Activated CD8-positive, alpha-beta memory T cell treated with anti-CD3 and anti-CD28 coated beads, Interleukin-2, amount 10 ng/mL, durations not matched to agents 7 days and 5 days (primary cell): ENCODE measurements at regions of chr16 and their contacts with region 1.

Region 1: GRCh38 chr16:72467157-72467759 is 295.3 kb upstream of the PMFBP1 start:
- DNase-seq: no peak
- ATAC-seq: no peak
- H3K4me3 Mint-ChIP-seq: no peak overlapping the region
- H3K27ac Mint-ChIP-seq: no peak overlapping the region
- H3K4me1 Mint-ChIP-seq: peaks cover 3% of the 10 kb centered on the region
- H3K27me3 Mint-ChIP-seq: no peaks in the 10 kb centered on the region

Region 2: DNA sequence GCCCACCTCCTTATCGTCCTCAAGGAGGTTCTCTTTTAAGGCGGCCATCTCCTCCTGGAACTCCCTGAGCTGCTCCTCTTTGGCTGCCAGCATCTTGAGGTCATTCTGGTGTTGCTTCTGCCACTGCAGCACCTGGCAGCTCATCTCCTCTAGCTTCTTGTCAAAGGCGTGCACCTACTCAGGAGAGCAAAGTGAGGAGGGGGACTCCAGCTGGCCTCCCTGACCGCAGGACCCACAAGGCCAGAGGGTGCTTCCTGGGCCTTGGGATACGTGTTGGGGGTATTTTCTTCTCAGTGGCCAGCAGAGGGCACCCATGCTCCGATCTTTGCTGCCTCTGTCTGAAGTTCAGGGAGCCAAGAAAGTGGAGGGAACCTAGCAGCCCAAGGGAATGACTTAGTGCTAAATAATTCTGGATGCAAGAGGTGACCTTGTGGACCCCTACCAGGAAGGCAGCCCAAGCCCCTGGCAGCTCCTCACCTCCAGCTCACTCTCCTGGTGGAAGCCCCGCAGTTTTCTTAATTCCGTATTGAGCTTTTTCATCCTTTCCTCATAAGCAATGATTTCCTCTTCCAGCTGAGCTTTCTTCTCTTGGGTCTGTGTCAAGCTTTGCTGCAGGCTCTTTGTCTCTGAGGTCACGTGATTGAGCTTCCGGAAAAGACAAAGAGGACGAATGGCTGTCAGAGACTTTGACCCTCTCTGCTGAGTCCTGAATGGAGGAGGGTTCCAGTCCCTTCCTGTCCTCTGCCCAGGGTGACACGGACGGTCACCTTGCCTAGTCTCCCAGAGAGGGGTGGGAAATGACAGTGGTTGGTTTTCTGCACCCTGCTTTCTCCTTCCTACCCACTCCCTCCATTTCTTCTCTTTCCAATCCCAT is 342.3 kb before region 1 on chr16:
- CTCF ChIA-PET with region 1: interaction called, 11 read pairs
- DNase-seq: peak; percentile 71
- ATAC-seq: peak; percentile 82
- H3K4me3 Mint-ChIP-seq: no peak overlapping the region
- H3K27ac Mint-ChIP-seq: no peak overlapping the region
- H3K4me1 Mint-ChIP-seq: no peaks in the 10 kb centered on the region
- H3K27me3 Mint-ChIP-seq: no peaks in the 10 kb centered on the region

Region 3: DNA sequence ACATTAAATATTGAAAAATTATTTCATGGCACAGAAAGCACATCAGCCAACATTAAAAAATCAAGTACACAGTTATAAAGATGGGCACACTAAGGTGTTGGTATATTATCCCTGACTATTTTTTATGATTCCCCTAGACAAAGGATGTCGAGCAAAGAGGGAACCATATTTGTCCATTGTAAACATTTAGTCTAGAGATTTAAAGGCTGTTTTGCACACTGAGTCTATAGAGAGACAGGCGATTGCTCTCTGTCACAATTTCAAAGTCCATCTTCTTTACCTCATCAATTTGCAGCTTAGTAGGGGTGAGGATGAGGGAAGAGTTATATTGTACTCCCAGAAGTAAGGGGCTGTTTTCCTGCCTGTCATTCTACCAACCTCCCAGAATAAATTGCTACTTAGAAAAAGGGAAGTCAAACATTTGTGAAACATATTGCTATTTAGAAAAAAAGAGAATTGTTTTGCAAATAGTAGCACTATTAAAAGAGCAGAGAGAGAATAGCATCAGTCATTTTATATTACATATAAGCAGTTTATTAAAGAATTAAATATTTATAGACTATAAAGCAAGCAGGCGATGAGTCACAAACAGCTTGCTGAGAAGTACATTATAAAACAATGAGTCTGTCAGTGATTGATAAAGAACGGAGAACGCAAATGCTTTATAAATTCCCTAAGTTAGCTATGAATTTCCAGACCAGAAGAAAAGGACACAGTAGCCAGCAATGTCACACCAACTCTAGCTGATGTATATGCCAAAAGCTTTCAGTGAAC is 24.7 kb before region 1 on chr16:
- CTCF ChIA-PET with region 1: no interaction called
- DNase-seq: no peak
- ATAC-seq: no peak
- H3K4me3 Mint-ChIP-seq: no peak overlapping the region
- H3K27ac Mint-ChIP-seq: no peak overlapping the region
- H3K4me1 Mint-ChIP-seq: no peaks in the 10 kb centered on the region
- H3K27me3 Mint-ChIP-seq: no peaks in the 10 kb centered on the region

Region 4: GRCh38 chr16:72480901-72481300 is 13.6 kb after region 1 on chr16:
- CTCF ChIA-PET with region 1: no interaction called
- DNase-seq: no peak
- ATAC-seq: no peak
- H3K4me3 Mint-ChIP-seq: no peak overlapping the region
- H3K27ac Mint-ChIP-seq: no peak overlapping the region
- H3K4me1 Mint-ChIP-seq: peaks cover 28% of the 10 kb centered on the region
- H3K27me3 Mint-ChIP-seq: no peaks in the 10 kb centered on the region